T-cell (primary cell): ENCODE measurements at regions of chr21 and their contacts with region 1.

Region 1: DNA sequence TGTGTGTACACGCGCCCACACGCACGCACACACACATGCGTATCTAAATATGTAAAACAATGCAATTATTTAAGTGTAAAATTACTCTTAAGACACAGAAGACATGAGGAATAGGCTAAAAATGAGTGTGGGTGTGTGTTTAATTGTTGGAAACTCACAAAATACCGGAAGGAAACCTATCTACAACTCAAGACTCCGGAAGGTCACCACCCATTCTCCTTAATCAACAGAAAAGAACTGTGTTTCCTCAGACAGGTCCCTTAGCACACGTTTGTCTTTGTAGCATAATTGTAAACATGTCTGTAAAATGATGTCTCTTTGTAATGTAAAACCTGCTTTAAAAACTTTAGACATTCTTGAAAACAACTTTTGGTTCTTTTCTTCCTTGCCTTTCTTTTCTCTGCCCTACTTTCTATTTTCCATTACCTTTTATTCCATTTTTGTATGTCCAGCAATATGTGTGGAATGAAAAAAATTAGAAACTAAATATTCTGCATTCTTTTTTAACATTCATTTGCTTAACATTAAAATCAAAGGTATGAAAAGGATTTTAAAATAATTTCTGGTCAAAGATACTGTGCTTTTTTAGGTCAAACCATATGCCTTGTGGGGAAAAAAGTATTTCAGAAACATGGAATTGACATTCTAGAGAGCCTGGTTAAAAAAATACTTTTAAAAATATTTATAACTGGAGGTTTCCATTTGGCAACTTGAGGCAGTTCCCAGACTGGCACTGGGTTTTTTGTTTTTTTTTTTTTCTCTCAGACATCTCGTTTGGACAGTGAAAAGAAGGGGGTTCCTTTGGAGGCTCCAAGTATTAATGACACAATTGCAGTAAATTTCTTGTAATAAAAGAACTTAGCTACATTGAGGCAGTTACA is 46.2 kb downstream of the ATP5PF start:
- DNase-seq: no peak
- ATAC-seq: no peak
- H3K4me3 ChIP-seq: no peak overlapping the region
- H3K4me3 Mint-ChIP-seq: no peak overlapping the region
- H3K27ac ChIP-seq: no peak overlapping the region
- H3K27ac Mint-ChIP-seq: no peak overlapping the region
- H3K4me1 ChIP-seq: no peaks in the 10 kb centered on the region
- H3K4me1 Mint-ChIP-seq: no peaks in the 10 kb centered on the region
- H3K27me3 ChIP-seq: no peaks in the 10 kb centered on the region
- H3K27me3 Mint-ChIP-seq: peaks cover 3 to 13% of the 10 kb centered on the region in 2 donors

Region 2: GRCh38 chr21:25539606-25540005 is 148.9 kb before region 1 on chr21:
- CTCF ChIA-PET with region 1: no interaction called
- POLR2A ChIA-PET with region 1: no interaction called
- DNase-seq: no peak
- ATAC-seq: no peak
- H3K4me3 ChIP-seq: no peak overlapping the region
- H3K4me3 Mint-ChIP-seq: no peak overlapping the region
- H3K27ac ChIP-seq: no peak overlapping the region
- H3K27ac Mint-ChIP-seq: no peak overlapping the region
- H3K4me1 ChIP-seq: no peaks in the 10 kb centered on the region
- H3K4me1 Mint-ChIP-seq: no peaks in the 10 kb centered on the region
- H3K27me3 ChIP-seq: no peaks in the 10 kb centered on the region
- H3K27me3 Mint-ChIP-seq: no peaks in the 10 kb centered on the region

Region 3: GRCh38 chr21:25649146-25649545 is 39.4 kb before region 1 on chr21:
- CTCF ChIA-PET with region 1: no interaction called
- POLR2A ChIA-PET with region 1: interaction called in 1 of 2 experiments, 13 read pairs
- DNase-seq: no peak
- ATAC-seq: no peak
- H3K4me3 ChIP-seq: no peak overlapping the region
- H3K4me3 Mint-ChIP-seq: no peak overlapping the region
- H3K27ac ChIP-seq: no peak overlapping the region
- H3K27ac Mint-ChIP-seq: no peak overlapping the region
- H3K4me1 ChIP-seq: no peaks in the 10 kb centered on the region
- H3K4me1 Mint-ChIP-seq: no peaks in the 10 kb centered on the region
- H3K27me3 ChIP-seq: no peaks in the 10 kb centered on the region
- H3K27me3 Mint-ChIP-seq: no peaks in the 10 kb centered on the region